ENCODE measurements at regions of chr21 and their contacts with region 1.

Region 1: GRCh38 chr21:29114765-29115164 is 15.7 kb upstream of the MAP3K7CL start:
- DNase-seq: no peak
- H3K4me3 ChIP-seq: no peak overlapping the region
- H3K27ac ChIP-seq: no peak overlapping the region
- H3K4me1 ChIP-seq: peaks cover 22% of the 10 kb centered on the region
- CTCF ChIP-seq: no peak

Region 2: GRCh38 chr21:29017639-29018237 is 97.0 kb before region 1 on chr21:
- CTCF ChIA-PET with region 1: no interaction called
- POLR2A ChIA-PET with region 1: no interaction called
- intact Hi-C with region 1: no loop called
- DNase-seq: peak; percentile 30
- H3K4me3 ChIP-seq: peak overlapping the region; percentile 86
- H3K27ac ChIP-seq: peak overlapping the region; percentile 56
- H3K4me1 ChIP-seq: peaks cover 18% of the 10 kb centered on the region
- CTCF ChIP-seq: no peak

Region 3: DNA sequence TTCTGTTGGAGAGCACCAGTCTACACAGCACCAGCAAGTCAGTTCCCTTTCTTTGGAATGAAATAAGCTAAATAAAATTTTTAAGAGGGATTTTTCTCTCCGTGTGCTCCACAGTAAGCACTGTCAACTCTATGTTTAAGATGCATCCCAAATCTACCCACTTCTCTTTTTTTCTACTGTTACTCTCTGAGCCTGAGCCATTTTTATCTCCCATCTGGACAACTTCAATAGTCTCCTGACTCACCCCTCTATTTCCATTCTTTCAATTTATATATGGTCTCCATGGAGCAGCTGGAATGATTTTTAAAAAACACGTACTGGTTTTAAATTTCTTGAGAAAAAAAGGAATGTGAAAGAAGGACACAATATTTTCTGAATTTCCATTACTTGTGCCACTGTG is 16.6 kb before region 1 on chr21:
- CTCF ChIA-PET with region 1: no interaction called
- POLR2A ChIA-PET with region 1: interaction called, 10 read pairs
- intact Hi-C with region 1: no loop called
- DNase-seq: no peak
- H3K4me3 ChIP-seq: no peak overlapping the region
- H3K27ac ChIP-seq: no peak overlapping the region
- H3K4me1 ChIP-seq: no peaks in the 10 kb centered on the region
- CTCF ChIP-seq: no peak

Region 4: GRCh38 chr21:29104239-29104708 is 10.5 kb before region 1 on chr21:
- CTCF ChIA-PET with region 1: no interaction called
- POLR2A ChIA-PET with region 1: interaction called, 13 read pairs
- intact Hi-C with region 1: no loop called
- DNase-seq: no peak
- H3K4me3 ChIP-seq: no peak overlapping the region
- H3K27ac ChIP-seq: no peak overlapping the region
- H3K4me1 ChIP-seq: no peaks in the 10 kb centered on the region
- CTCF ChIP-seq: no peak

Region 5: DNA sequence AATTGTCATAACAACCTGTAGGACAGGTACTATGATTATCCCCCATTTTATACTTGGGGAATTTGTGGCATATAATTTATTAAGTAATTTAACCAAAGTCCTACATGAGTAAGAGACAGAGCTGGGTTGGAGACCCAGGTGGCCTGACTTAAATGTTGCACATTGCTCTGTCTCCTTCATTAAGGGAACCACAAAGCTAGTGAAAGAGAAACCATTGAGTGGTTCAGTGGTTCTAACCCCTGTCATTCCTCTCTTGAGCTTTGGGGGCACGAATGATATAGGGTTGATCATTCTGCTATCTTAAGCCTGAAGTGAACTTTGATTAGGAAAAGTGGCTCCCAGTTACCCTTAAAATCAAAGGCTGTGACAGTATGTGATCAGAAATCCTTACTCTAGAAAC is 10.4 kb after region 1 on chr21:
- CTCF ChIA-PET with region 1: no interaction called
- POLR2A ChIA-PET with region 1: interaction called, 23 read pairs
- intact Hi-C with region 1: no loop called
- DNase-seq: peak; percentile 56
- H3K4me3 ChIP-seq: peak overlapping the region; percentile 29
- H3K27ac ChIP-seq: peak overlapping the region; percentile 29
- H3K4me1 ChIP-seq: peaks cover 31% of the 10 kb centered on the region
- CTCF ChIP-seq: 0 out of 2 replicates have a peak, but pooled peaks have one; percentile 9

Region 6: DNA sequence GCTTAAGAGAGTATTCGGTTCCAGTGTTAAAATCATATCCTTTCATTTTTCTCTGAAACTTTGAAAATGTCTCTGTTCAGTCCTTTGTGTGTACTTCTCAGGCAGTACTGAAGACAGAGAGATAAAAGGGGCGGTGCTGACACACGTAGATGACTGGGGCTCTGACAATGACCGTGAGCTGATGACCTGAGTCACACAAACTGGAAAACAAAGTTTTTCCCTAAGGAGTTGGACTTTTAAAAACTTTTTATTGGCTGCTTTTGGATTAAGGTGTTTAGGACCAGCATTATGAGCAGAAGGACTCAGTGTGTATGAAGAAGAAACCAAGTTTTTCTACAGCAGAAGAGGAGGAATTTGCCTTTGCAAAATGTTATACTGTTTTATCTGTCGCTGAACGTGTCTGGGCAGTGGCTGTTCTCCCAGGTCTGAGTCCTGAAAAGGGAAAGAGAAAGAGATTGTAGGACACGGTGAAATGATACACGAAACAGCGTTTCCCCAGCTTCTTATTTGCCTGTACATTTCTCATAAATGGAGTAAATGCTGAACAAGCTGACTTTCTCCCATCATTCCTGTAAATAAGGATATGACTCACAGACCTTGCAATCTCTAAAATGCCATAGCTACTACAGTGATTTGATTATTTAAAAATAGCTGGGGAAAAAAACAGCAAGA is 67.2 kb after region 1 on chr21:
- CTCF ChIA-PET with region 1: no interaction called
- POLR2A ChIA-PET with region 1: no interaction called
- intact Hi-C with region 1: no loop called
- DNase-seq: no peak
- H3K4me3 ChIP-seq: no peak overlapping the region
- H3K27ac ChIP-seq: no peak overlapping the region
- H3K4me1 ChIP-seq: no peaks in the 10 kb centered on the region
- CTCF ChIP-seq: no peak